Ascending aorta (tissue), 2 donors: ENCODE measurements at regions of chr14 and their contacts with region 1.

Region 1: DNA sequence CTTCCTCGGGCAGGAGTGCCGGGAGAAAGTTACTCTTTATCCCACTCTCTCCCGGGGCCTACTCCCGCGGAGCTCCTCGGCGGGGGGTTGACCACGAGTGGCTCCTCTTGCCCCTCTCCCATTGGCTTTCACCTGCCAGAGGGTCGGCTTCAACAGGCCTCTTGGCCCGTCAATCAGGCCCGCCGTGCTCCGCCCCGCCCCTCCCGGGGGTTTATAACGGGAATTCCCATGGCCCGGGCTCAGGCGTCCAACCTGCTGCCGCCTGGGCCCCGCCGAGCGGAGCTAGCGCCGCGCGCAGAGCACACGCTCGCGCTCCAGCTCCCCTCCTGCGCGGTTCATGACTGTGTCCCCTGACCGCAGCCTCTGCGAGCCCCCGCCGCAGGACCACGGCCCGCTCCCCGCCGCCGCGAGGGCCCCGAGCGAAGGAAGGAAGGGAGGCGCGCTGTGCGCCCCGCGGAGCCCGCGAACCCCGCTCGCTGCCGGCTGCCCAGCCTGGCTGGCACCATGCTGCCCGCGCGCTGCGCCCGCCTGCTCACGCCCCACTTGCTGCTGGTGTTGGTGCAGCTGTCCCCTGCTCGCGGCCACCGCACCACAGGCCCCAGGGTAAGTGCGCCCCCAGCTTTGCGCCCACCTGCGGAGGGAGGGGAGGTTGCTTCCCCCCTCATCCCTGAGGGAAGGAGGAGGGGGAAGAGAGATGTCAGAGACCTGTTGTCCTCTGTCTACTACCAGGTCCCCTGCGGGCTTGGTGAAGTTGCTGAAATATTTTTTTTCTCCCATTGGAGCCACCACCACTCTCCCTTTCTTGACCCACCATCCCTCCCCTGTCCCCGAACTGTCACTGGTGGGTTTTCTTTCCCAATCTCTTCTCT is at the start of gene SMOC1:
- DNase-seq: no peak
- H3K4me3 ChIP-seq: peak within 1 kb of the TSS; percentile 39 to 43
- H3K27ac ChIP-seq: no peak within 1 kb of the TSS
- H3K4me1 ChIP-seq: no peaks in the 10 kb centered on the region
- H3K27me3 ChIP-seq: no peaks in the 10 kb centered on the region
- CTCF ChIP-seq: no peak
- total RNA-seq, gene SMOC1: 16.6 TPM

Region 2: GRCh38 chr14:69755784-69756183 is 123.6 kb before region 1 on chr14:
- intact Hi-C with region 1: no loop called
- DNase-seq: no peak
- H3K4me3 ChIP-seq: no peak overlapping the region
- H3K27ac ChIP-seq: no peak overlapping the region
- H3K4me1 ChIP-seq: no peaks in the 10 kb centered on the region
- H3K27me3 ChIP-seq: no peaks in the 10 kb centered on the region
- CTCF ChIP-seq: no peak

Region 3: GRCh38 chr14:69997849-69998248 is 118.4 kb after region 1 on chr14:
- intact Hi-C with region 1: loop called (anchors 5 kb)
- DNase-seq: peak in 1 of 2 donors; percentile 68
- H3K4me3 ChIP-seq: no peak overlapping the region
- H3K27ac ChIP-seq: no peak overlapping the region
- H3K4me1 ChIP-seq: no peaks in the 10 kb centered on the region
- H3K27me3 ChIP-seq: no peaks in the 10 kb centered on the region
- CTCF ChIP-seq: no peak